PC-9 (cell line): ENCODE measurements at regions of chr10 and their contacts with region 1.

Region 1: GRCh38 chr10:114550756-114551635 is 107.1 kb downstream of the ABLIM1 start:
- DNase-seq: peak in 1 of 2 experiments; percentile 40
- H3K4me3 ChIP-seq: no peak overlapping the region
- H3K27ac ChIP-seq: no peak overlapping the region
- H3K4me1 ChIP-seq: no peaks in the 10 kb centered on the region
- H3K27me3 ChIP-seq: no peaks in the 10 kb centered on the region
- CTCF ChIP-seq: peak; percentile 74

Region 2: GRCh38 chr10:114429581-114430335 is 121.2 kb before region 1 on chr10:
- CTCF ChIA-PET with region 1: no interaction called
- POLR2A ChIA-PET with region 1: no interaction called
- intact Hi-C with region 1: no loop called
- DNase-seq: no peak
- H3K4me3 ChIP-seq: no peak overlapping the region
- H3K27ac ChIP-seq: no peak overlapping the region
- H3K4me1 ChIP-seq: no peaks in the 10 kb centered on the region
- H3K27me3 ChIP-seq: no peaks in the 10 kb centered on the region
- CTCF ChIP-seq: no peak

Region 3: DNA sequence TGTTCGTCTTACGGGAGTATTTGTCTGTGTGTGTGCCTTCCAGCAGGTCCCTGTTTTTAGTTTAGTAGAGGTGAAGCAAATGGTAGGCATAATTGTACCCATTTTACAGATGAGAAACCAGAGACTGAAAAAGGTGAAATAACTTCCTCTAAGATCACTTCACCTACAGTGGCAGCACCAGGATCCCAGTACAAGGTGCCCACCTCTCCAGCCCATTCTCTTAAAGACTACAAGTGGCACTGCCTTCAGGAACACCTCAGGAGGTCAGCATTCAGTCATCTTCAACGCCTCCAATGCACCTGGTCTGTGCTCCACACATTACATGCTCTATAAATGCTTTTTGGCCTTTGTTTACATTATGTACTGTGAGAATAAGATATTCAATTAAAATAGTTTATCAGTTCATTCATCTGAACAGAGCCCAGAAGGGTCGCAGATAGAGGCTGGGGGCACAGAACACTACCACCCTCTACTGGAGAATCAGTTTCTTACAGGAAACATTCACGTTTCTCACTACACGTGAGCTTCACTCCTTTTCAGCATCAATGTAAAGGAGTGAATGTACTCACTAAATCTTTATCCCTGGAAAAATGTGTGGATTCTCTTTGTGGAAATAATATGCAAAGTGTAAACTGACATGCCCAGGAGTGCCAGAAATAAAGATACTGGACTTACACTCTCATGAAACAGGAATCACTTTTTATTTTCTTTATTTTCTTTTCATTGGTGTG is 152.5 kb after region 1 on chr10:
- CTCF ChIA-PET with region 1: no interaction called
- POLR2A ChIA-PET with region 1: no interaction called
- intact Hi-C with region 1: loop called (anchors 1 kb)
- DNase-seq: no peak
- H3K4me3 ChIP-seq: no peak overlapping the region
- H3K27ac ChIP-seq: no peak overlapping the region
- H3K4me1 ChIP-seq: peaks cover 24% of the 10 kb centered on the region
- H3K27me3 ChIP-seq: no peaks in the 10 kb centered on the region
- CTCF ChIP-seq: peak; percentile 67

Region 4: GRCh38 chr10:115129752-115130151 is 578.8 kb after region 1 on chr10:
- CTCF ChIA-PET with region 1: no interaction called
- POLR2A ChIA-PET with region 1: no interaction called
- intact Hi-C with region 1: loop called (anchors 10 kb)
- DNase-seq: no peak
- H3K4me3 ChIP-seq: no peak overlapping the region
- H3K27ac ChIP-seq: no peak overlapping the region
- H3K4me1 ChIP-seq: no peaks in the 10 kb centered on the region
- H3K27me3 ChIP-seq: no peaks in the 10 kb centered on the region
- CTCF ChIP-seq: peak; percentile 50